ENCODE measurements at regions of chr3 and their contacts with region 1.

Region 1: GRCh38 chr3:28916713-28917499 is 364.0 kb upstream of the RBMS3 start:
- DNase-seq: peak; percentile 52
- H3K4me3 ChIP-seq: peak overlapping the region in 1 of 3 experiments; percentile 15
- H3K27ac ChIP-seq: peak overlapping the region; percentile 23
- H3K4me1 ChIP-seq: peaks cover 9% of the 10 kb centered on the region
- H3K27me3 ChIP-seq: no peaks in the 10 kb centered on the region
- CTCF ChIP-seq: peak; percentile 66 to 81

Region 2: GRCh38 chr3:29091599-29092189 is 174.8 kb after region 1 on chr3:
- CTCF ChIA-PET with region 1: no interaction called
- dilution Hi-C with region 1: no loop called
- in situ Hi-C with region 1: no loop called
- intact Hi-C with region 1: loop called (anchors 1 kb)
- DNase-seq: no peak
- H3K4me3 ChIP-seq: no peak overlapping the region
- H3K27ac ChIP-seq: no peak overlapping the region
- H3K4me1 ChIP-seq: no peaks in the 10 kb centered on the region
- H3K27me3 ChIP-seq: no peaks in the 10 kb centered on the region
- CTCF ChIP-seq: no peak

Region 3: DNA sequence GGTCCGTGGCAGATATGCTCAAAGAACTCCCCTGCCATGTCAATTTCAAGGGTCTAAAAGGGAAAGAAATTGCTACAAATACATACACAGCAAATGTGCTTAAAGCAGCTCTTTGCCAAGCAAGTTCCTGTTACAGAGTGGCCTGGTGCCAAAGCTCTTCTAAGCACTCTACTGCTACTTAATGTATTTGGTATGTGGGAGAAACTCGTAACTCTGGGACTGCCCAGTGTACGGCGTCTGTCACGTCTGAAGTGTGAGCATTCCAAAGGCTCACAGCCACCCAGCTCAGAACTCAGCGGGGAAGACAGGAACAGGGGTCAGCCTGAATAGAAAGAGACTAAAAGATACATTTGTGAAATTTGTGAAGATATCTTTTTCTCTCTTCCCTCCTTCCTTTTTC is 418.5 kb after region 1 on chr3:
- CTCF ChIA-PET with region 1: no interaction called
- dilution Hi-C with region 1: no loop called
- in situ Hi-C with region 1: no loop called
- intact Hi-C with region 1: loop called (anchors 1 kb)
- DNase-seq: peak; percentile 93
- H3K4me3 ChIP-seq: peak overlapping the region; percentile 19 to 32 (median 30)
- H3K27ac ChIP-seq: peak overlapping the region; percentile 94
- H3K4me1 ChIP-seq: peaks cover 48% of the 10 kb centered on the region
- H3K27me3 ChIP-seq: no peaks in the 10 kb centered on the region
- CTCF ChIP-seq: no peak

Region 4: GRCh38 chr3:29693863-29694262 is 777.0 kb after region 1 on chr3:
- CTCF ChIA-PET with region 1: no interaction called
- dilution Hi-C with region 1: no loop called
- in situ Hi-C with region 1: no loop called
- intact Hi-C with region 1: loop called (anchors 10 kb)
- DNase-seq: peak; percentile 57
- H3K4me3 ChIP-seq: peak overlapping the region in 1 of 3 experiments; percentile 15
- H3K27ac ChIP-seq: peak overlapping the region; percentile 95
- H3K4me1 ChIP-seq: peaks cover 34% of the 10 kb centered on the region
- H3K27me3 ChIP-seq: no peaks in the 10 kb centered on the region
- CTCF ChIP-seq: no peak

Region 5: GRCh38 chr3:30012941-30013543 is 1096.1 kb after region 1 on chr3:
- CTCF ChIA-PET with region 1: no interaction called
- dilution Hi-C with region 1: no loop called
- in situ Hi-C with region 1: no loop called
- intact Hi-C with region 1: loop called (anchors 10 kb)
- DNase-seq: peak; percentile 58
- H3K4me3 ChIP-seq: no peak overlapping the region
- H3K27ac ChIP-seq: no peak overlapping the region
- H3K4me1 ChIP-seq: no peaks in the 10 kb centered on the region
- H3K27me3 ChIP-seq: no peaks in the 10 kb centered on the region
- CTCF ChIP-seq: peak; percentile 65 to 70

Measured in mammary epithelial cell (primary cell).